SK-N-SH (cell line): ENCODE measurements at regions of chr15 and their contacts with region 1.

Region 1: DNA sequence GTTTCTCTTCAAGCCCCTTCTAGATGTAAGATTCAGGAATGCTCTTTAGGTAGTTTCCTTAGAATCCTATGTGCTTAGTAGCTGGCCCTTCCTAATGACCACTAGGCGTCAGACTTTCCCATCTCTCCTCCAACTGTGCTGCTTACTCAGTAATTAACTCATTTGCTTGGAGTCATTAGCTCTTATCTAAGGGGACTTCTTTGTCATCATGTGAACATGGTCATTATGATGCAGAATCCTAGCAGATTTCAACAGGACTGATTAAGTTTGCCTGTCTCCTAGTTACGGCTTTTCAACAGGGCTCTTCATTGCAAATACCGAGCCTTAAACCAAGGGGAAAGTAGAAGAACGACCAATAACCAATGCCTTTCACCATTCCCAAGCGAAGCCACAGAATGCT is 46.4 kb downstream of the GJD2 start:
- DNase-seq: peak; percentile 50
- H3K4me3 ChIP-seq: peak overlapping the region in 1 of 2 experiments; percentile 46; a peak in 1 of 4 replicates
- H3K27ac ChIP-seq: no peak overlapping the region
- H3K4me1 ChIP-seq: peaks cover 0 to 7% of the 10 kb centered on the region in 2 experiments; a peak in 2 of 4 replicates
- H3K27me3 ChIP-seq: 0 out of 2 replicates have a peak, but pooled peaks cover 4% of the 10 kb centered on the region
- CTCF ChIP-seq: peak; percentile 90
- EP300 ChIP-seq: no peak
- RAD21 ChIP-seq: peak; percentile 90

Region 2: DNA sequence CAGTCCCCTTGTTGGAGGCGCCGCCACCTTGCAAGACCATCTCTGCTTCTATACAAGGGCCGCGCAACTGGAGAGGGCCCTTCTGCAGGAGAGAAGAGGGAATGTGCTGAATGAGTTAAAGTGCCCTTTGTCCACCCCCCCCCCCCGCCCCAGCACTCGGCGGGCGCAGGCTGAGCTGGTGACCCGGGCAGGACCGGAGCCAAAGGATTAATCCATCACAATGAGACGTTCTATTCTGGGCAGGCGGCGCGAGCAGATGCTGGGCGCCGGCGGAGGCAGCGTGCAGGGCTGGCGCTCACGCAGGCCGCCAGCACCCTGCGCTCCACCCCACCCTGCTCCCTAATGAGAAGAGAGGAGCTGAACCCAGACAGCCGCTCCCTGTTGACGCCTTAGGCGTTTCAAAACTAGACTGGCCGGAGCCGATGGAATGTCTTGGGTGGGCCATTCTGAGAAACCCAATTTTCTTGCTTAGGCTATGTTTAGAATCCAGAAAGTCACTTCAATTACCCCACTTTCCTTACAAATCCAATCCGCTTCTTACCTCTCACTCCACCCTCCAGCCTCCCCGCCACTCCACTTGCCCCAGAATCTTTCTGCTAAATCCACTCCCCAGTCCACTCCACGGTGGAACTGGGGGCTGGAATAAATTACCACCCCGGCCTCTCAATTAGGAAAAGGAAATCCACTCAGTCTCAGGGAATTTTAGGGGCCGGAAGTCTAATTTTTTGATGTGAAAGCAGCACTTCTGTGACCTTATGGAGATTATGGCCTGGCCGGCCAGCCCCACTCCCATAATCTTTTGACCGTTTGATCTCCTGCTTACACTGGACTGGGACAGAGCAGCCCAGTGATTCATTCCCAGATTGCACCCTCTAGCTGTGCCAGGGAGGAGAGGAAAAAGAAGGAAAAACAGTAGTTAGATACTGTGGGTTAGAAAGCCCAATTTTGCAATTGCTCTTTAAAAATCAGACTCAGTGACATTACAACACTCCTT is 13.7 kb after region 1 on chr15:
- CTCF ChIA-PET with region 1: interaction called, 32 read pairs
- POLR2A ChIA-PET with region 1: no interaction called
- DNase-seq: peak; percentile 85
- H3K4me3 ChIP-seq: peak overlapping the region; percentile 33 to 39; a peak in 3 of 4 replicates
- H3K27ac ChIP-seq: peak overlapping the region; percentile 68 to 81
- H3K4me1 ChIP-seq: peaks cover 10 to 17% of the 10 kb centered on the region in 2 experiments; a peak in 3 of 4 replicates
- H3K27me3 ChIP-seq: no peaks in the 10 kb centered on the region
- CTCF ChIP-seq: peak; percentile 27; the same call in 1 of the 2 replicates
- EP300 ChIP-seq: peak in 1 of 2 experiments; percentile 6; a peak in 1 of 4 replicates
- RAD21 ChIP-seq: peak; percentile 31

Region 3: GRCh38 chr15:34815836-34816235 is 107.4 kb after region 1 on chr15:
- CTCF ChIA-PET with region 1: interaction called, 10 read pairs
- POLR2A ChIA-PET with region 1: no interaction called
- DNase-seq: no peak
- H3K4me3 ChIP-seq: no peak overlapping the region
- H3K27ac ChIP-seq: peak overlapping the region in 1 of 2 experiments; percentile 6; a peak in 1 of 4 replicates
- H3K4me1 ChIP-seq: peaks cover 9 to 15% of the 10 kb centered on the region in 2 experiments
- H3K27me3 ChIP-seq: no peaks in the 10 kb centered on the region
- CTCF ChIP-seq: no peak
- EP300 ChIP-seq: no peak
- RAD21 ChIP-seq: no peak

Region 4: DNA sequence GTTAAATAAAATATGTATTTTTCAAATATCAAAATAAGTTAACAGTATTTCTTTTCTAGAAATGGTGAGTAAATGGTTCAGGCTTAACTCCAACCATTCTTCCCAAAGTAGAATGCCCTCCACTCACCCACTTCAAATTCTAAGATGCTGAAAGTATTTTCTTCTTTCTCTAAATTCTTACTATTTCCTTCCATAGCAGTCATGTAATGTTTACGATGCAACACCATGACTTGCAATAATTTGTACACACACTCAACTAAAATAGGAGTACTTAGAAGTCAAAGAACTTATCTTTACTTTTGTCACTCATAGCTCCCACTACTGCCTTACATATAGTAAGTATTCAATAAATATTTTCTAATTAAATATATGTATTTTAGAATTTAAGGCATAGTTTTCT is 196.1 kb after region 1 on chr15:
- CTCF ChIA-PET with region 1: interaction called, 11 read pairs
- POLR2A ChIA-PET with region 1: no interaction called
- DNase-seq: no peak
- H3K4me3 ChIP-seq: no peak overlapping the region
- H3K27ac ChIP-seq: no peak overlapping the region
- H3K4me1 ChIP-seq: no peaks in the 10 kb centered on the region
- H3K27me3 ChIP-seq: no peaks in the 10 kb centered on the region
- CTCF ChIP-seq: no peak
- EP300 ChIP-seq: no peak
- RAD21 ChIP-seq: no peak

Region 5: GRCh38 chr15:34927726-34928125 is 219.3 kb after region 1 on chr15:
- CTCF ChIA-PET with region 1: interaction called, 16 read pairs
- POLR2A ChIA-PET with region 1: no interaction called
- DNase-seq: no peak
- H3K4me3 ChIP-seq: no peak overlapping the region
- H3K27ac ChIP-seq: no peak overlapping the region
- H3K4me1 ChIP-seq: no peaks in the 10 kb centered on the region
- H3K27me3 ChIP-seq: no peaks in the 10 kb centered on the region
- CTCF ChIP-seq: no peak
- EP300 ChIP-seq: no peak
- RAD21 ChIP-seq: no peak